ENCODE measurements at regions of chr1 and their contacts with region 1.

Region 1: GRCh38 chr1:85276215-85276977 is at the start of gene BCL10:
- DNase-seq: peak; percentile 98
- H3K4me3 Mint-ChIP-seq: peak within 1 kb of the TSS; percentile 88
- H3K27ac Mint-ChIP-seq: peak within 1 kb of the TSS; percentile 87
- H3K4me1 Mint-ChIP-seq: peaks cover 67% of the 10 kb centered on the region
- H3K27me3 Mint-ChIP-seq: peaks cover 11% of the 10 kb centered on the region
- total RNA-seq, gene BCL10: 25.1 and 28.8 TPM in 2 replicates

Region 2: GRCh38 chr1:84143796-84144565 is 1132.4 kb before region 1 on chr1 and contains the start of gene PRKACB:
- intact Hi-C with region 1: loop called (anchors 5 kb)
- DNase-seq: peak; percentile 20
- H3K4me3 Mint-ChIP-seq: peak within 1 kb of the TSS; percentile 96
- H3K27ac Mint-ChIP-seq: peak within 1 kb of the TSS; percentile 99
- H3K4me1 Mint-ChIP-seq: peaks cover 44% of the 10 kb centered on the region
- H3K27me3 Mint-ChIP-seq: no peaks in the 10 kb centered on the region
- total RNA-seq, gene PRKACB: 20.8 and 22.7 TPM in 2 replicates

Region 3: GRCh38 chr1:84690397-84691121 is 585.8 kb before region 1 on chr1 and contains the start of gene SSX2IP:
- intact Hi-C with region 1: loop called (anchors 1 kb)
- DNase-seq: peak; percentile 98
- H3K4me3 Mint-ChIP-seq: peak within 1 kb of the TSS; percentile 94
- H3K27ac Mint-ChIP-seq: peak within 1 kb of the TSS; percentile 95
- H3K4me1 Mint-ChIP-seq: peaks cover 59% of the 10 kb centered on the region
- H3K27me3 Mint-ChIP-seq: no peaks in the 10 kb centered on the region
- total RNA-seq, gene SSX2IP: 11.1 and 15.0 TPM in 2 replicates

Region 4: GRCh38 chr1:84959294-84959693 is 317.1 kb before region 1 on chr1:
- intact Hi-C with region 1: loop called (anchors 1 kb)
- DNase-seq: peak; percentile 41
- H3K4me3 Mint-ChIP-seq: peak overlapping the region; percentile 27
- H3K27ac Mint-ChIP-seq: peak overlapping the region; percentile 59
- H3K4me1 Mint-ChIP-seq: peaks cover 24% of the 10 kb centered on the region
- H3K27me3 Mint-ChIP-seq: no peaks in the 10 kb centered on the region

Region 5: DNA sequence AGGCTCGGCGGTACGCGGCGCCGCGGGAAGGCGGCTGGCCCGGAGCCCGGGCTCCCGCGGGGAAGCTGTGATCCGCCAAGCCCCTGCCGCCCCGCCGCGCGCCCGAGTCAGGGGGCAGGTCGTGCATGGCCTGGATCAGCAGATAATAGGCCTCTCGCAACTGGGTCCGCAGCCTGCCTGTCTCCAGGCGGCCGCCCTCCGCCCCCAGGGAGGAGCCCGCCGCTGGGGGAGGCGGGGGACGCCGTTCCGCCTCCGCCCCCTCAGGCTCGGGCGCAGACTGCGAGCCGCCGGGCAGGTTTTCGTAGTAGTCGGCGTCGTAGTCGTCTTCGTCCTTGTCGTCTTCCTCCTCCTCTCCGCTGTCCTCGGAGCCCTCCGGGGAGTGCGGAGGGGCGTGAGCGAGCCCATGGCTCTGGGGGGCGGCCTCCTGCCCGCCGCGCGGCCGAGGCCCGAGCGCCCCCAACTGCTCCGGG is 75.5 kb before region 1 on chr1 and contains the start of gene SYDE2:
- intact Hi-C with region 1: loop called (anchors 1 kb)
- DNase-seq: peak; percentile 67
- H3K4me3 Mint-ChIP-seq: peak within 1 kb of the TSS; percentile 94
- H3K27ac Mint-ChIP-seq: peak within 1 kb of the TSS; percentile 88
- H3K4me1 Mint-ChIP-seq: peaks cover 18% of the 10 kb centered on the region
- H3K27me3 Mint-ChIP-seq: peaks cover 40% of the 10 kb centered on the region
- total RNA-seq, gene SYDE2: 0.76 and 0.83 TPM in 2 replicates

Region 6: DNA sequence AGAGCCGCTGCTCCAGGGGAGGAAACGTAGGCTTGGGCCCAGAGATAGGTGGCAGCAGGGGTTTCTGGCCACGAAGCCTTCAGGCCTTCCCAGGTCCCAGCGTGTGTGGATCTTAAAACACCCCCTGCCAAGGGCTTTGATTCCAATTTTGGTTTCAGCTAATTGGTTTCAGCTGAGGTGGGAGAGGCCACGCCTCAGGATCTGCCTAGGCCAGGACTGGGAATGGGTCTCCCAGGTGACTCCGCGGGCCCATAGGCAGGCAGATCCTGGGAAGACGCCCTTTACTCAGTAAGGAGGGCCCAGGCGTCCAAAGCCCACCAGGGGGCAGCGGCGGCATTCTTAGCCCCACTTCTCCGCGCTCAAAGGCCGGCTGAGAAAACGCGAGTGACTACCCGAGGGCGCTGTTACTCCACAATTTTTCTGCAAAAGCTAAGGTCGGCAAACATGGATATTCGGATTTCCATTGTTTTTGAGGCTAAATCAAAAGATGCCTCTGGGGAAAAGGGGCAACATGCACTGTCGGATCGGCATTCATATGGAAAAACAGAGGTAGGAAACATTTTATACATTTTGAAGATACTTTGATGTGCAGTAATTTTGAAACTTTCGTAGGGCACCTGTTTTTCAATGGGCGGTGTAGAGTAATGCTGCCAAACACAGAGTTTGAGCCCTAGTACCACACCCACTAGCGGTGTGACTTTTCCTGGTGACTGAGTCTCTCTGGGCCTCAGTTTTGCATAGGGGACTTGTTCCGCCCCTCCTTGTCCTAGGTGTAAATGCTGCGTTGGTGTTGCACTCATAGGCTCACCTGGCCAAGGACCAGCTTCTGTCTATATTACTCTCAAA is 31.8 kb after region 1 on chr1:
- intact Hi-C with region 1: no loop called
- DNase-seq: peak; percentile 22
- H3K4me3 Mint-ChIP-seq: no peak overlapping the region
- H3K27ac Mint-ChIP-seq: no peak overlapping the region
- H3K4me1 Mint-ChIP-seq: peaks cover 5% of the 10 kb centered on the region
- H3K27me3 Mint-ChIP-seq: peaks cover 62% of the 10 kb centered on the region

Region 7: GRCh38 chr1:85321237-85321964 is 45.0 kb after region 1 on chr1:
- intact Hi-C with region 1: loop called (anchors 1 kb)
- DNase-seq: no peak
- H3K4me3 Mint-ChIP-seq: no peak overlapping the region
- H3K27ac Mint-ChIP-seq: no peak overlapping the region
- H3K4me1 Mint-ChIP-seq: peaks cover 10% of the 10 kb centered on the region
- H3K27me3 Mint-ChIP-seq: peaks cover 51% of the 10 kb centered on the region

Region 8: GRCh38 chr1:86395771-86396497 is 1119.5 kb after region 1 on chr1 and contains the start of gene ODF2L:
- intact Hi-C with region 1: loop called (anchors 10 kb)
- DNase-seq: peak; percentile 90
- H3K4me3 Mint-ChIP-seq: peak within 1 kb of the TSS; percentile 97
- H3K27ac Mint-ChIP-seq: peak within 1 kb of the TSS; percentile 96
- H3K4me1 Mint-ChIP-seq: peaks cover 54% of the 10 kb centered on the region
- H3K27me3 Mint-ChIP-seq: no peaks in the 10 kb centered on the region
- total RNA-seq, gene ODF2L: 21.0 and 22.4 TPM in 2 replicates

Measured in activated T-helper 1 cell treated with anti-CD3 and anti-CD28 coated beads, Interleukin-12 subunit alpha, Interleukin-12 subunit beta, Interleukin-2, Interleukin-4 antibody, amounts not matched to agents 30 ng/mL and 10 ng/mL and 1 ng/mL, durations not matched to agents 14 hours and 24 hours and 36 hours (primary cell).